Right ventricle myocardium inferior (tissue), 1 donor: ENCODE measurements at regions of chr6 and their contacts with region 1.

Region 1: GRCh38 chr6:150800674-150801314 is 64.7 kb upstream of the MTHFD1L start:
- DNase-seq: no peak
- ATAC-seq: peak; percentile 56

Region 2: DNA sequence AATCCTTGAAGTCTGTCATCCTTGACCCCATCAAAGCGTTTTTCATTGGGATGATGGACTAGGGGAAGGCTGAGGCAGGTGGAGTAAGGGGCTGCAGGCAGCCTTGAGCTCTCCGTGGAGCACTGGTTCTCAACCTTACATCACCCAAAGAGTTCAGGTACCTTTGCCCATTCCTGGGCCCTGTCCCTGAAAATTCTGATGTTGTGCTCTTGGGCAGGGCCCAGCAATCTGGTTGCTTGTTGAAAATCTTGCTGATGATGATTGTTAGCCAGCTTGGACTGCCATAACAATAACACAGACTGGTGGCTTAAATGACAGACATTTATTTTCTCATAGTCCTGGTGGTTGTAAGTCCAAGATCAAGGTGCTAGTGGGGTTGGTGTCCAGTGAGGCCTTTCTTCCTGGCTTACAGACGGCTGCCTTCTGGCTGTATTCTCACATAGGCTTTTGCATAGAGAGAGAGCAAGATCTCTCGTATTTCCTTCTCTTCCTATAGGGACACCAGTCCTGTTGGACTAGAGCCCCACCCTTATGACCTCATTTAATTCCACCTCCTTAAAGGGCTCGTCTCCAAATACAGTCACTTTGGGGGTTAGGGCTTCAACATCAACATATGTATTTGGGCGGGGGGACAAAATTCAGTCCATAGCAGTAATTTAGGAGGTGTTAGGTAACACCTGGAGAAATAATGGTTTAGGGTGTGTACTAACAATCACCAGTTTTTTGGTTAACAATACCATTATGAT is 96.2 kb before region 1 on chr6:
- intact Hi-C with region 1: loop called (anchors 5 kb)
- DNase-seq: no peak
- ATAC-seq: no peak

Region 3: DNA sequence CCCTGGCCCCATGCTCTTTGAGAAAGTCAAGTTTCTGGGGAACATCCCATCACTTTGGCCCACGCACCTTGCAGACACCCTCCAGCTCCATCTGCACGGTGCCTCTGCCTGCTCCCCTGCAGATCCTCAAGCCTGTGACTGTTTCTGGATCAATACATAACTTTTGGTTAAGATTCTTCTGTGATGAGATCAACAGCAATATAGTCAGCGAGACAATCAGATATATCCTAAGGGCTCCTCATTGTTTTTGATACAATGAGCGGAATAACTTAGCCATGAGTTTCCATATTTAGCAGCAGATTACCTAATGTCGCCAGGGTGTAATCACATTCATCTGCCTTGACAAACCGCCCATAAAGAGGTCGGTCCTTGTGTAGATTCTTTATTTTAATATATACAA is 44.6 kb before region 1 on chr6:
- intact Hi-C with region 1: no loop called
- DNase-seq: no peak
- ATAC-seq: no peak